WTC11 (cell line): ENCODE measurements at regions of chr1 and their contacts with region 1.

Region 1: DNA sequence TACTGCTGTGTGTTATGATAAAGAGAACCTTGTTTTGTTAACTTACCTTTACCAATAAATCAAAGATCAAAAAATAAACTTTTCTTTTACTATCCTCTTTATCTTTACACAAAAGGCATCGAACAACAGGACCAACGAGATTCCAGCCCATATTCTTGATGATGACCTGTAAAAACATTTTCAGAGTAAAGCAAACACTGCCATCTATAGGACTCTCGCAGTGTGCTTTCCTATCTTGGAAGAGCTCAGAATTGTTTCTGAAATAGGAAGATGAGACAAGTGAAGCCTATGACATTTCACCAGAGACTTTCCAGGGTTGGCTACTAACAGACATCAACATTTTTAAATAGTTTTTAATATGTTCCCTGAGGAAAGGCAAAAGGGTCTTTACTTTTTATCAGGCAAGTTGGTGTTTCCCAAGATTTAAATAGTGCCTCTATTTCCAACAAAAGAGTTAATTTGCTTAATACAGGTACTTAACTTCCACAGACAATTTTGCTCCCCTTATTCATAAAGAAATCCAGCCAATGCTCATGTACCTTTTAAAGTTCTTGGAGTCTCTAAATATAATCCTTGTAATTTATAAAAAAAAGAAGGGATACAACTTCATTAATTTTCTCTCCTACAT is 7.3 kb downstream of the GLMN start:
- DNase-seq: no peak
- ATAC-seq: peak; percentile 75
- H3K4me3 Mint-ChIP-seq: no peak overlapping the region
- H3K27ac Mint-ChIP-seq: no peak overlapping the region; the same call in 1 of the 2 replicates
- H3K4me1 Mint-ChIP-seq: peaks cover 2% of the 10 kb centered on the region; the same call in 1 of the 2 replicates
- H3K27me3 Mint-ChIP-seq: no peaks in the 10 kb centered on the region
- CTCF ChIP-seq: 0 out of 2 replicates have a peak, but pooled peaks have one; percentile 21

Region 2: GRCh38 chr1:91929250-91929649 is 362.2 kb before region 1 on chr1:
- CTCF ChIA-PET with region 1: interaction called, 10 read pairs
- POLR2A ChIA-PET with region 1: no interaction called
- DNase-seq: peak; percentile 43
- ATAC-seq: peak; percentile 94
- H3K4me3 Mint-ChIP-seq: no peak overlapping the region
- H3K27ac Mint-ChIP-seq: no peak overlapping the region
- H3K4me1 Mint-ChIP-seq: peaks cover 13% of the 10 kb centered on the region
- H3K27me3 Mint-ChIP-seq: no peaks in the 10 kb centered on the region
- CTCF ChIP-seq: no peak

Region 3: GRCh38 chr1:91997607-91998195 is 293.8 kb before region 1 on chr1:
- CTCF ChIA-PET with region 1: interaction called, 40 read pairs
- POLR2A ChIA-PET with region 1: no interaction called
- DNase-seq: no peak
- ATAC-seq: no peak
- H3K4me3 Mint-ChIP-seq: no peak overlapping the region
- H3K27ac Mint-ChIP-seq: no peak overlapping the region
- H3K4me1 Mint-ChIP-seq: no peaks in the 10 kb centered on the region
- H3K27me3 Mint-ChIP-seq: no peaks in the 10 kb centered on the region
- CTCF ChIP-seq: peak; percentile 14; the same call in 1 of the 2 replicates

Region 4: GRCh38 chr1:92419642-92420041 is 128.2 kb after region 1 on chr1:
- CTCF ChIA-PET with region 1: no interaction called
- POLR2A ChIA-PET with region 1: no interaction called
- DNase-seq: no peak
- ATAC-seq: peak; percentile 47
- H3K4me3 Mint-ChIP-seq: no peak overlapping the region
- H3K27ac Mint-ChIP-seq: no peak overlapping the region
- H3K4me1 Mint-ChIP-seq: peaks cover 13% of the 10 kb centered on the region
- H3K27me3 Mint-ChIP-seq: no peaks in the 10 kb centered on the region
- CTCF ChIP-seq: no peak